ENCODE measurements at regions of chr7 and their contacts with region 1.

Region 1: GRCh38 chr7:156903232-156903909 is 10.4 kb upstream of the LMBR1 start:
- DNase-seq: no peak
- ATAC-seq: no peak
- H3K4me3 ChIP-seq: no peak overlapping the region
- H3K27ac ChIP-seq: no peak overlapping the region
- H3K4me1 ChIP-seq: peaks cover 3 to 8% of the 10 kb centered on the region in 2 experiments; a peak in 2 of 5 replicates
- H3K27me3 ChIP-seq: no peaks in the 10 kb centered on the region
- CTCF ChIP-seq: no peak
- EP300 ChIP-seq: no peak
- POLR2A ChIP-seq: no peak
- RAD21 ChIP-seq: no peak

Region 2: GRCh38 chr7:156881679-156882078 is 21.7 kb before region 1 on chr7:
- CTCF ChIA-PET with region 1: no interaction called
- POLR2A ChIA-PET with region 1: no interaction called
- in situ Hi-C with region 1: no loop called
- intact Hi-C with region 1: no loop called
- DNase-seq: no peak
- ATAC-seq: no peak
- H3K4me3 ChIP-seq: no peak overlapping the region
- H3K27ac ChIP-seq: no peak overlapping the region
- H3K4me1 ChIP-seq: peaks cover 7 to 8% of the 10 kb centered on the region in 2 experiments; a peak in 4 of 5 replicates
- H3K27me3 ChIP-seq: no peaks in the 10 kb centered on the region
- CTCF ChIP-seq: no peak
- EP300 ChIP-seq: no peak
- POLR2A ChIP-seq: no peak
- RAD21 ChIP-seq: no peak

Region 3: GRCh38 chr7:156892821-156893706 is 10.3 kb before region 1 on chr7 and contains the start of gene LMBR1:
- CTCF ChIA-PET with region 1: no interaction called
- POLR2A ChIA-PET with region 1: interaction called, 14 read pairs
- in situ Hi-C with region 1: no loop called
- intact Hi-C with region 1: no loop called
- DNase-seq: peak; percentile 98 to 99 (median 98)
- ATAC-seq: peak; percentile 86
- H3K4me3 ChIP-seq: peak within 1 kb of the TSS; percentile 77
- H3K27ac ChIP-seq: peak within 1 kb of the TSS; percentile 89
- H3K4me1 ChIP-seq: peaks cover 13 to 30% of the 10 kb centered on the region in 2 experiments
- H3K27me3 ChIP-seq: no peaks in the 10 kb centered on the region
- CTCF ChIP-seq: peak; percentile 37 to 78 (median 74)
- EP300 ChIP-seq: peak; percentile 35; the same call in 1 of the 2 replicates
- POLR2A ChIP-seq: peak; percentile 94
- RAD21 ChIP-seq: peak; percentile 14 to 17; a peak in 2 of 4 replicates
- polyA plus RNA-seq, gene LMBR1: 7.7 to 9.6 TPM

Region 4: GRCh38 chr7:156949541-156950380 is 46.4 kb after region 1 on chr7 and contains the start of gene NOM1:
- CTCF ChIA-PET with region 1: no interaction called
- POLR2A ChIA-PET with region 1: no interaction called
- in situ Hi-C with region 1: no loop called
- intact Hi-C with region 1: loop called (anchors 2 kb)
- DNase-seq: peak; percentile 96 to 97 (median 96)
- ATAC-seq: peak; percentile 89
- H3K4me3 ChIP-seq: peak within 1 kb of the TSS; percentile 95
- H3K27ac ChIP-seq: peak within 1 kb of the TSS; percentile 85
- H3K4me1 ChIP-seq: peaks cover 20 to 25% of the 10 kb centered on the region in 2 experiments; a peak in 4 of 5 replicates
- H3K27me3 ChIP-seq: peaks cover 2 to 4% of the 10 kb centered on the region in 2 experiments
- CTCF ChIP-seq: peak; percentile 71 to 93 (median 90)
- EP300 ChIP-seq: no peak; the same call in 1 of the 2 replicates
- POLR2A ChIP-seq: peak; percentile 94
- RAD21 ChIP-seq: peak in 1 of 2 experiments; percentile 55; a peak in 3 of 4 replicates
- polyA plus RNA-seq, gene NOM1: 6.8 to 9.6 TPM

Region 5: DNA sequence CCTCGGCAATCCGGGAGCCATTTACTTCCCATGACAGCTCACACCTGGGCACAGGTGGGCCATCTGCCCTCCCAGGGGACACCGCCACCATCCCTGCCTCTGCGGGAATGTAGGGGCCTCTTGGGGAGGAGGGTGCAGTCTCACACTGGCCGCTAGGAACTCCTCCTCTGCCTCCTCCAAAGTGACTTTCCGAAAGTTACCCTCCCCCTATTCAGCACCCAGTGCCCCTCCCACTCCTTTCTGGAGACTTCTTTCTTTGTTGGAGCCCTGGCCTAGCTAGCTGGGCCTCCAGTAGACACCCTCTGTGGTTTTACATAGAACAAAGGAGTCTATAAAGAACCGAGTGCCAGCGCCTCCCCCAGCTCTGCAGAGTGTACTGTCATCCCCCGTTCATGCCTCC is 152.9 kb after region 1 on chr7:
- CTCF ChIA-PET with region 1: no interaction called
- POLR2A ChIA-PET with region 1: no interaction called
- in situ Hi-C with region 1: no loop called
- intact Hi-C with region 1: loop called (anchors 10 kb)
- DNase-seq: peak in 3 of 4 experiments; percentile 49 to 71 (median 61)
- ATAC-seq: peak; percentile 90
- H3K4me3 ChIP-seq: no peak overlapping the region
- H3K27ac ChIP-seq: no peak overlapping the region
- H3K4me1 ChIP-seq: no peaks in the 10 kb centered on the region
- H3K27me3 ChIP-seq: peaks cover 69 to 75% of the 10 kb centered on the region in 2 experiments
- CTCF ChIP-seq: peak; percentile 13 to 43 (median 35); a peak in 5 of 6 replicates
- EP300 ChIP-seq: no peak
- POLR2A ChIP-seq: no peak
- RAD21 ChIP-seq: no peak

Region 6: DNA sequence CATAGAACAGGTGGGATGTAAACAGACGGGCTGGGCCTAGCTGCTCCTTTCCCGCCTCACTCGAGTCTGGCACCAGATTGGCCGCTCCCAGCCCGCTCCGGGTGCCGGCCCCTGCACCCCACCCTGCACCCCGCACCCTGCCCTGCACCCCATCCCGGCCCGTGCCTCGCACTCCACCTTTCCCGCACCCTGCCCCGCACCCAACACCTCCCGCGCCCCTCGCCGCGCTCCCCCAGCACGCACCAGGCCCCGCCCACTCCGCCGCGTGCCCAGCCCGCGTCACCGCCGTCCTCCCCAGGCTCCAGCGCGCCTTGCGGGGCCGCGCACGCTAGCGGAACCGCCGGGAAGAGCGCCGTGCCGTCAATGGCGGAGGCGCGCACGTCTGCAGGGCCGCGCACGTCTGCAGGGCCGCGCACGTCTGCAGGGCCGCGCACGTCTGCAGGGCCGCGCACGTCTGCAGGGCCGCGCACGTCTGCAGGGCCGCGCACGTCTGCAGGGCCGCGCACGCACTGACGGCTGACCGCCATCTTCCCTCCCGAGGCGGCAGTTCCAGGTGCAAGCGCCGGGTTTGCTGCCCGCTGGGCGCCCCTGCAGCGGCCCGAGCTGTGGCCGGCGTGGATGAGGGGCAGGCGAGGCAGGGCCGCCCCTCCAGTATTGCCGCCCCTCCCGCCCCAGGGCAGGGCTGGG is 235.2 kb after region 1 on chr7 and contains the start of gene UBE3C:
- CTCF ChIA-PET with region 1: no interaction called
- POLR2A ChIA-PET with region 1: no interaction called
- in situ Hi-C with region 1: no loop called
- intact Hi-C with region 1: loop called (anchors 10 kb)
- DNase-seq: peak; percentile 96 to 98 (median 98)
- ATAC-seq: peak; percentile 91
- H3K4me3 ChIP-seq: peak within 1 kb of the TSS; percentile 88
- H3K27ac ChIP-seq: peak within 1 kb of the TSS; percentile 88
- H3K4me1 ChIP-seq: peaks cover 25 to 28% of the 10 kb centered on the region in 2 experiments
- H3K27me3 ChIP-seq: no peaks in the 10 kb centered on the region
- CTCF ChIP-seq: peak in 1 of 3 experiments; percentile 17; a peak in 1 of 6 replicates
- EP300 ChIP-seq: no peak; the same call in 1 of the 2 replicates
- POLR2A ChIP-seq: peak; percentile 84
- RAD21 ChIP-seq: no peak
- polyA plus RNA-seq, gene UBE3C: 9.6 to 15.3 TPM

Region 7: GRCh38 chr7:157204134-157204533 is 300.8 kb after region 1 on chr7:
- CTCF ChIA-PET with region 1: no interaction called
- POLR2A ChIA-PET with region 1: no interaction called
- in situ Hi-C with region 1: no loop called
- intact Hi-C with region 1: no loop called
- DNase-seq: no peak
- ATAC-seq: no peak
- H3K4me3 ChIP-seq: no peak overlapping the region
- H3K27ac ChIP-seq: no peak overlapping the region
- H3K4me1 ChIP-seq: no peaks in the 10 kb centered on the region
- H3K27me3 ChIP-seq: no peaks in the 10 kb centered on the region
- CTCF ChIP-seq: no peak
- EP300 ChIP-seq: no peak
- POLR2A ChIP-seq: no peak
- RAD21 ChIP-seq: no peak

Region 8: DNA sequence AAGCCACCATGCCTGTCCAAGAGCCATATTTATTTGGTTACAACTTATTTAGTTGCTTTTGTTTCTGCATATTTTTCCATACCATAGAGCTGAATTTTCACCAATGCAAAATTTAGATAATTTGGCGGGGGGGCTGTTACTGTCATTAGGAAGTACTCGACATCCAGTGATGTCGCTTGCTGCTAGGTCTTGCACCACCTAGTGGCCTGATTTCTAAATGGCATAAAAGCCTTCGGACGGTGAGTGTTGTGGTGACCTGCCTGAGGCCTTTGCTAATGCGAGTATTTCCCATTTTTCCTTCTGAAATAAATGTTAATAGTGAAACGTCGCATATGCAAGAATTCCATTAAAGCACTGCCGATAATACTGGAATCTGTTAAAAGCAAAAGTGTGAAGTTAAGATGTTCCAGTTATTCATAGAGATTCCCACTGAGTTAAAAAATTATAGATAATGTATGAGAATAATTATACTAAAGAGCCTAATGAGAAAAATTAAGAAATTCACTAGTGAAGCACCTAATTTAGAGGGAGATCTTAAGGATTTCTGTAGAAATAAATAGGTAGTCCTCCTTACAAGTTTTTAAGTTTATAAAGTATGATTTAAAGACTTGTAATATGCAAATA is 347.3 kb after region 1 on chr7:
- CTCF ChIA-PET with region 1: interaction called, 18 read pairs
- POLR2A ChIA-PET with region 1: no interaction called
- in situ Hi-C with region 1: no loop called
- intact Hi-C with region 1: no loop called
- DNase-seq: peak; percentile 68 to 85 (median 81)
- ATAC-seq: peak; percentile 98
- H3K4me3 ChIP-seq: no peak overlapping the region
- H3K27ac ChIP-seq: no peak overlapping the region
- H3K4me1 ChIP-seq: no peaks in the 10 kb centered on the region
- H3K27me3 ChIP-seq: no peaks in the 10 kb centered on the region
- CTCF ChIP-seq: peak; percentile 83 to 94 (median 91)
- EP300 ChIP-seq: no peak
- POLR2A ChIP-seq: no peak
- RAD21 ChIP-seq: peak; percentile 51 to 59

Region 9: DNA sequence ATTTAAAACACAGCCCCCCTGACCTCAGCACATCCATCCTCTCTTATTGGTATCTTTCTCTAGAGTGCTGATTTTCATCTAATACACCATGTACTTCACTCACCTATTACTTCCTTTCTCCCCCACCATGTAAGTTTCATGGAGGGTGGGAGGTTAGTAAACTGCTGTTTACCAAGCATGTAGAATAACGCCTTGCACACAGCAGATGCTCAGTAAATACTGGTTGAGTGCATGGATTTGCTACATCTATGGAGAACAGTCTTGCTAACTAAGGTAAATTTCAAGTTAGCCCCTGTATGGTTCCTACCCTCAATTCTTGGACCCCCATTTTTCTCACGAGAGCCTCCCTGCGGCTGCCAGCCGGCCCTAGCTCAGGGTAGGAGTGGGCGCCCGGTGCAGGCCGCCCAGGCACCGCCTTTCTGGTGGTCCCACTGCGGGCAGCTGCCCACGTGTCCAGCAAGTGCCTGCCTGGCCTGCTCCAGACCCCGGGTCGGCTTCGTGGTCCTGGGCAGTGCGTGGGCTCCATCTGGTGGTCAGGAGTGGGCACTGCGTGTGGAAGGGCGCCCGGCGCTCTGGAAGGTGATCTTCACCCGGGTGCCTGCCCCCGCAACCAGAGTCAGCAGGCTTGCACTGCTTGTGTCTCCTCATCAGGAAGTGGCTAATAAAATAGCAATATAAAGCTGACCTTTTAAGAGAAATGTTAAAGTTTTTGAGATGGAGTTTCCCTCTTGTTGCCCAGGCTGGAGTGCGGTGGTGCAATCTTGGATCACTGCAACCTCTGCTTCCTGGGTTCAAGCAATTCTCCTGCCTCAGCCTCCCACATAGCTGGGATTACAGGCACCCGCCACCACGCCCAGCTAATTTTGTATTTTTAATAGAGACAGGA is 370.1 kb after region 1 on chr7:
- CTCF ChIA-PET with region 1: interaction called, 8 read pairs
- POLR2A ChIA-PET with region 1: no interaction called
- in situ Hi-C with region 1: no loop called
- intact Hi-C with region 1: loop called (anchors 2 kb)
- DNase-seq: peak; percentile 89 to 99 (median 98)
- ATAC-seq: peak; percentile 92
- H3K4me3 ChIP-seq: no peak overlapping the region
- H3K27ac ChIP-seq: no peak overlapping the region
- H3K4me1 ChIP-seq: peaks cover 4 to 26% of the 10 kb centered on the region in 2 experiments; a peak in 4 of 5 replicates
- H3K27me3 ChIP-seq: peaks cover 0 to 6% of the 10 kb centered on the region in 2 experiments; a peak in 3 of 5 replicates
- CTCF ChIP-seq: peak; percentile 97 to 98 (median 98)
- EP300 ChIP-seq: no peak
- POLR2A ChIP-seq: no peak; the same call in 1 of the 2 replicates
- RAD21 ChIP-seq: peak; percentile 88 to 93